B cell (primary cell): ENCODE measurements at regions of chr2 and their contacts with region 1.

Region 1: GRCh38 chr2:47697000-47697601 is 85.8 kb upstream of the MSH6 start:
- DNase-seq: peak; percentile 55
- ATAC-seq: peak; percentile 34
- H3K4me3 ChIP-seq: no peak overlapping the region
- H3K4me3 Mint-ChIP-seq: peak overlapping the region; percentile 51
- H3K27ac ChIP-seq: peak overlapping the region; percentile 20 to 57
- H3K27ac Mint-ChIP-seq: peak overlapping the region; percentile 66
- H3K4me1 ChIP-seq: peaks cover 41 to 58% of the 10 kb centered on the region in 2 donors
- H3K4me1 Mint-ChIP-seq: peaks cover 65% of the 10 kb centered on the region
- H3K27me3 ChIP-seq: no peaks in the 10 kb centered on the region
- H3K27me3 Mint-ChIP-seq: no peaks in the 10 kb centered on the region
- CTCF ChIP-seq: no peak

Region 2: DNA sequence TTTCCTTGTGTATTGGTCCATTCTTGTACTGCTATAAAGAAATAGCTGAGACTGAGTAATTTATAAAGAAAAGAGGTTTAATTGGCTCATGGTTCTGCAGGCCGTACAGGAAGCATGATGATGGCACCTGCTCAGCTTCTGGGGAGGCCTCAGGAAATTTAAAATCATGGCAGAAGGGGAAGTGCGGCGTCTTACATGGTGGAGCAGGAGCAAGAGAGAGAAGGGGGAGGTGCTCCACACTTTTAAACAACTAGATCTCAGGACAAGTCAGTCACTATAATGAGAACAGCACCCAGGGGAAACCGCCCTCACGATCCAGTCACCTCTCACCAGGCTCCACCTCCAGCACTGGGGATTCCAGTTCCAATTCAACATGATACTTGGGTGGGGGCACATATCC is 239.8 kb before region 1 on chr2:
- CTCF ChIA-PET with region 1: no interaction called
- POLR2A ChIA-PET with region 1: no interaction called
- intact Hi-C with region 1: no loop called
- DNase-seq: no peak
- ATAC-seq: no peak
- H3K4me3 ChIP-seq: no peak overlapping the region
- H3K4me3 Mint-ChIP-seq: no peak overlapping the region
- H3K27ac ChIP-seq: no peak overlapping the region
- H3K27ac Mint-ChIP-seq: no peak overlapping the region
- H3K4me1 ChIP-seq: peaks cover 0 to 3% of the 10 kb centered on the region in 2 donors
- H3K4me1 Mint-ChIP-seq: peaks cover 9% of the 10 kb centered on the region
- H3K27me3 ChIP-seq: no peaks in the 10 kb centered on the region
- H3K27me3 Mint-ChIP-seq: no peaks in the 10 kb centered on the region
- CTCF ChIP-seq: no peak

Region 3: DNA sequence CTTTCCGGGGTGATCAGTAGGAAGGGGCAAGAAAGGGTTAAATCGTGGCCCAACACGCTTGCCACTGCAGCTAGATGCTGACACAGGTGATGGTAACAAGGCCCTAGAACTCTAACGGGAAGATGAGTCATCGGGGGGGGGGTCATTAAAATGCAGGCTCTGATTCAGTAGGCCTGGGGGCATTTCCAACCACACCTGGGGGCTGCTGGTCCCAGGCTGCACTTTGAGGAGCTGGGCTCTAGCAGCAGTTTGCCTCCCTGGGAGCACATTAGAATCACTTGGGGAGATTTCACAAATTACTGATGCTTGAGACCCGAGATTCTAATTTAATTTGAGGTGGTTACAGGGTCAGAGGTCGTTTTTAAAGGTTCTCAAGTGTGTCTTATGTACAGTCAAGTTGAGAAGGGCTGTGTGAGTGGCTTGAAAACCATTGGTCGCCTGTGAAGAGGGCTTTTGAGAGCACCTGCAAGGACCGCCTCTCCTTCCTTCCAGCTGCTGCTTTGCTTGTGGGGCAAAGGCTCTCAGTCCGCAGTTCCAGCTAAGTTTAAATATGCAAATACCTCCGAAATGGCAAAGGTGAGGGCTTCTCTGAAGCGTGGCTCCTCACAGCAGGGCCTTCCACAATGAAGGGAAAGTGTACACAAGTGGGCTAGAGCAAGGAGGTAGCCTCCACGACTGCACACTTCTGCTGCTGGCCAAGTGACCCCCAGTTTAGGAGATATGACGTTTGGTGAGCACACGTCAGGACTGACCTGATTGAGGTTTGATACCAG is 42.1 kb before region 1 on chr2:
- CTCF ChIA-PET with region 1: no interaction called
- POLR2A ChIA-PET with region 1: no interaction called
- intact Hi-C with region 1: loop called (anchors 5 kb)
- DNase-seq: peak; percentile 74
- ATAC-seq: peak; percentile 91
- H3K4me3 ChIP-seq: no peak overlapping the region
- H3K4me3 Mint-ChIP-seq: peak overlapping the region; percentile 60
- H3K27ac ChIP-seq: peak overlapping the region; percentile 13 to 67
- H3K27ac Mint-ChIP-seq: peak overlapping the region; percentile 83
- H3K4me1 ChIP-seq: peaks cover 35 to 53% of the 10 kb centered on the region in 2 donors
- H3K4me1 Mint-ChIP-seq: peaks cover 58% of the 10 kb centered on the region
- H3K27me3 ChIP-seq: no peaks in the 10 kb centered on the region
- H3K27me3 Mint-ChIP-seq: no peaks in the 10 kb centered on the region
- CTCF ChIP-seq: no peak

Region 4: DNA sequence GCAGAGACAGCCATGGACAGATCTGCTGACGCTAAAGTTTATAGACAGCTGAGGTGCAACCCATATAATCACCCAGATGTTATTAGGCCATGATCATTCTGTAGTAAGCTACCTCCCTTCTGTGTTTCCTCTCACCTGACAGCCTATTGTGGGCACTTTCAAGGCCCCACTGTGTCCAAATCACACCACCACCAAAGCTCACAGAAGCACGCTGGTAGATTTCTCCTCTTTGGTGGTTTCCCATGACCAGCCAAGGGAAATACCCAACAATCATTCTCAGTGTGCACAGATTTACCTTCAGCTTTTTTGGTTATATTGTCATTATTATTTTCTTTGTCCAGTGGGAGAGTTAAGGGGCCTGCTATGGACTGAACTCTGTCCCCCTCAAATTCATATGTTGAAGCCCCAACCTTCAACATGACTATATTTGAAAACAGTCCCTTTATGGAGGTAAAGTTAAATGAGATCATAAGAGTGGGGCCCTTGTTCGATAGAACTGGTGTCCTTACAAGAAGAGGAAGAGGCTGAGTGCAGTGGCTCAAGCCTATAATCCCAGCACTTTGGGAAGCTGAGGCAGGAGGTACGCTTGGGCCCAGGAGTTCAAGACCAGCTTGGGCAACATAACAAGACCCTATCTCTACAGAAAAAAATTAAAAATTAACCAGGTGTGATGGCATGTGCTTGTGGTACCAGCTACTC is 11.8 kb after region 1 on chr2:
- CTCF ChIA-PET with region 1: no interaction called
- POLR2A ChIA-PET with region 1: interaction called, 3 read pairs
- intact Hi-C with region 1: loop called (anchors 2 kb)
- DNase-seq: peak; percentile 71
- ATAC-seq: peak; percentile 88
- H3K4me3 ChIP-seq: no peak overlapping the region
- H3K4me3 Mint-ChIP-seq: peak overlapping the region; percentile 43
- H3K27ac ChIP-seq: peak overlapping the region; percentile 11 to 74
- H3K27ac Mint-ChIP-seq: peak overlapping the region; percentile 79
- H3K4me1 ChIP-seq: peaks cover 21 to 30% of the 10 kb centered on the region in 2 donors
- H3K4me1 Mint-ChIP-seq: peaks cover 22% of the 10 kb centered on the region
- H3K27me3 ChIP-seq: no peaks in the 10 kb centered on the region
- H3K27me3 Mint-ChIP-seq: no peaks in the 10 kb centered on the region
- CTCF ChIP-seq: no peak

Region 5: DNA sequence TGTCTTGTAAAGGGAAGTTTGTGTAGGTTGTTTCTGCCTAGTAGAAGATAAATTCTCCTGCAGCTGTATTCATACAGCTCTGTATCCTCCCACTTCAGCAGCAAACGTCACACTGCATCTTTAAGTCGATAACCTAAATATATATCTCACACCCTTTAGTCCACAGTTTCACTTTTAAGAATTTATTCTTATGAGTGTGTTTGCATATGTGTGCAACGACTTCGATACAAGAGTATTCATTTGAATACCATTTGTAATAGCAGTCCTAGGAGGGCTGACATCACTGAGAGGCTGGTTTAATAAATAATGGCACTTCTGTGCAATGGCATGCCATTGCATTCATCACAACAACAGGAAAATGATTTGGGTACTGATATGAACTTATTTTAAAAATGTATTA is 22.0 kb after region 1 on chr2:
- CTCF ChIA-PET with region 1: no interaction called
- POLR2A ChIA-PET with region 1: interaction called, 10 read pairs
- intact Hi-C with region 1: loop called (anchors 1 kb)
- DNase-seq: peak; percentile 34
- ATAC-seq: peak; percentile 29
- H3K4me3 ChIP-seq: no peak overlapping the region
- H3K4me3 Mint-ChIP-seq: peak overlapping the region; percentile 48
- H3K27ac ChIP-seq: no peak overlapping the region
- H3K27ac Mint-ChIP-seq: peak overlapping the region; percentile 75
- H3K4me1 ChIP-seq: peaks cover 48 to 74% of the 10 kb centered on the region in 2 donors
- H3K4me1 Mint-ChIP-seq: peaks cover 44% of the 10 kb centered on the region
- H3K27me3 ChIP-seq: peaks cover 0 to 2% (median 0%) of the 10 kb centered on the region in 4 experiments
- H3K27me3 Mint-ChIP-seq: no peaks in the 10 kb centered on the region
- CTCF ChIP-seq: no peak

Region 6: GRCh38 chr2:47724221-47724981 is 27.3 kb after region 1 on chr2:
- CTCF ChIA-PET with region 1: no interaction called
- POLR2A ChIA-PET with region 1: interaction called, 10 read pairs
- intact Hi-C with region 1: loop called (anchors 1 kb)
- DNase-seq: peak; percentile 94
- ATAC-seq: peak; percentile 88
- H3K4me3 ChIP-seq: peak overlapping the region in 1 of 5 experiments; percentile 22
- H3K4me3 Mint-ChIP-seq: peak overlapping the region; percentile 59
- H3K27ac ChIP-seq: peak overlapping the region; percentile 91 to 92
- H3K27ac Mint-ChIP-seq: peak overlapping the region; percentile 94
- H3K4me1 ChIP-seq: peaks cover 58 to 73% of the 10 kb centered on the region in 2 donors
- H3K4me1 Mint-ChIP-seq: peaks cover 69% of the 10 kb centered on the region
- H3K27me3 ChIP-seq: no peaks in the 10 kb centered on the region
- H3K27me3 Mint-ChIP-seq: no peaks in the 10 kb centered on the region
- CTCF ChIP-seq: no peak

Region 7: DNA sequence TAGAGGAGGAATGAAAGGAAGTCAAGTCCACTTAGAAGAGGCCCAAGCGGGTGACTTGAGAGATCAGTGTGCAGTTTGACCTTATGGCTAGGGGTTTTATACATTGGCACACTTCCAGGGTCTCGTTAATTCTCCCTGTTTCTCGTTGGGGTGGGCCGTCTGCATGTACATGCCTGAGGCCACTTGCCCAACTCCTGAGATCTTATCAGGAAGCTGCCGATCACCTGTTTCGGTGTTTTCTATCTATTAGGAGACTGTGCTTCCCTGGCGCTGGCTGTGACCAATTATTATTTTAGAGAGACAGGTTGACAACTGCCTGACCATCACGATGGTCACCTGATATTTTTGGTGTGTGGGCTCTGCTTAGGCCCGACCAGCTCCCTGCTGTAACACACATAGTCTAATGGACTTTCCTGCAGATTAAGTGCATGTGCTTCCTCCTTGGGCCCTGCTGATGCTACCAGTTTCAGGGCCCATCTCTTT is 54.8 kb after region 1 on chr2:
- CTCF ChIA-PET with region 1: interaction called, 3 read pairs
- POLR2A ChIA-PET with region 1: interaction called, 3 read pairs
- intact Hi-C with region 1: loop called (anchors 5 kb)
- DNase-seq: peak; percentile 21
- ATAC-seq: no peak
- H3K4me3 ChIP-seq: no peak overlapping the region
- H3K4me3 Mint-ChIP-seq: no peak overlapping the region
- H3K27ac ChIP-seq: peak overlapping the region; percentile 22 to 62
- H3K27ac Mint-ChIP-seq: peak overlapping the region; percentile 91
- H3K4me1 ChIP-seq: peaks cover 26 to 35% of the 10 kb centered on the region in 2 donors
- H3K4me1 Mint-ChIP-seq: peaks cover 32% of the 10 kb centered on the region
- H3K27me3 ChIP-seq: no peaks in the 10 kb centered on the region
- H3K27me3 Mint-ChIP-seq: no peaks in the 10 kb centered on the region
- CTCF ChIP-seq: no peak

Region 8: DNA sequence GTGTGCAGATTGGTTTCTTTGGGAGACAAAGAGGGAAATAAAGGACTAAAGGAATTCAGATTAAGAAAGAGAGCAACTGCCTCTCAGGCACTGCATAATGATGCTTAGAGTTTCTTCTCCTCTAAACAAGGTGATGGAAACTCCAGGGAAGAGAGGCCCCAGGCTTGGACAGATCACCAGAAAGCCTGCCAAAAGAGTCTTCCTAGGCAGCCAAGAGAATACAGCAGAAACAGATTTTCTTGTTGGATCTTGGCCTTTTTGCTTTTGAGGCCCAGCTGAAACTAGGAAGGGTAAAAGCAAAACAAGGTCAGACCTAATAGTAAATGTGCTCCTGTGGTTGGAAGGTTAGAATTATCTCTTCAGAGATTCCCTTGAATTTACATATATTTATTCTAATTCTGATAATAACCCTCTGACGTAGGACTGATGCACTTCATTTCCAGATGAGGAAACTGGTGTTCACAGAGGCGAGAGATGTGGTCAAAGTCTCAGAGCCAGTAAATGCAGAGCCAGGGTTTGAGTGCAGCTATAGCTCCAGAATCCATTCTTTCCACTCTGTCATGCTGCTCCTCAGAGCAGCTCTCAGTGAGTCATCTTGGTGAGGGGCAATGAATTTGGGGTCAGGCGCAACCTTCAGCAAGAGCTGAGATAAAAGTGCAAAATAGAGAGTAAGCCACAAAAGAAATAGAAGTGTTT is 351.5 kb after region 1 on chr2:
- CTCF ChIA-PET with region 1: no interaction called
- POLR2A ChIA-PET with region 1: no interaction called
- intact Hi-C with region 1: no loop called
- DNase-seq: peak; percentile 22
- ATAC-seq: peak; percentile 24
- H3K4me3 ChIP-seq: no peak overlapping the region
- H3K4me3 Mint-ChIP-seq: no peak overlapping the region
- H3K27ac ChIP-seq: no peak overlapping the region
- H3K27ac Mint-ChIP-seq: no peak overlapping the region
- H3K4me1 ChIP-seq: peaks cover 17 to 25% of the 10 kb centered on the region in 2 donors
- H3K4me1 Mint-ChIP-seq: peaks cover 35% of the 10 kb centered on the region
- H3K27me3 ChIP-seq: no peaks in the 10 kb centered on the region
- H3K27me3 Mint-ChIP-seq: no peaks in the 10 kb centered on the region
- CTCF ChIP-seq: no peak